Heart left ventricle (tissue), 16 donors: ENCODE measurements at regions of chr19 and their contacts with region 1.

Region 1: DNA sequence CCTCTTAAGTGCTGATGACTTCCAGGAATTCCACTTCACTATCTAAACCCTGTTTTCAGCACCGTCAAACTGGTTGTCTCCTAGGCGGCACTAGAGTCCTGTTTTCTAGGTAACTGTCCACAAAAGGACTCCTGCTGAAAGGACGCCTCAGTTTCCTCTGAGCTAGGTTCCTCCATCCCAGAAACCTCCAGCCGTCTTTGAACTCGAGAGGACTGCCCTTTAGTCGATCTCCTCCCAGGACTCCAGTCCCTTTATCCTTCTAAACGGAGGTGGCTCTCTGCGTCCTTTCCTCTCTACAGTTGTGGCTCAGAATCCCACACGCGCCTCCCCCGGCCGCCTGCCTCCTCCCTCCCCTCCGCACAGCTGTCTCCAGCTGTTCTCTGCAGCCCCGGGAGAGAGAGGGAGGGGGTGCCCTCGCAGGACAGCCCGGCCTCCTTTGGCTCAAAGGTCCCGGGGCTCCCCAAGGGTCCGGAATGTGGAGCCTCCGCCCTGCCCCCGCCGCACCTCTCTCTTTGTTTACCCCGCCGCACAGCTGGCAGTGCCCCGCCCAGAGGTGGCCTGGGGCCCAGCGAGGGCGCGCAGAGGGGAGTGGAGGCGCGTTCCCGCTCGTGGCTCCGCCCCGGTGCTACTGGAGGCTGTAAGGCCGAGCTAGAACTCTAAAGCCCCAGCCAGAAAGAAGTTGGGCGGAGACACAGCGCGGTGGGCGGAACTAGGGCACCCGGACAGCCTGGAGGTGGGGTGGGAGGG is 2.4 kb downstream of the LTBP4 start:
- DNase-seq: peak; percentile 97 to 98 (median 98)
- ATAC-seq: peak; percentile 77 to 86 (median 84)
- H3K4me3 ChIP-seq: peak overlapping the region; percentile 7 to 96 (median 68)
- H3K27ac ChIP-seq: peak overlapping the region; percentile 67 to 97 (median 86)
- H3K4me1 ChIP-seq: peaks cover 0 to 81% (median 66%) of the 10 kb centered on the region in 12 donors
- H3K27me3 ChIP-seq: peaks cover 0 to 32% (median 0%) of the 10 kb centered on the region in 9 donors
- CTCF ChIP-seq: peak in 1 of 12 donors; percentile 4
- POLR2A ChIP-seq: peak; percentile 62 to 88

Region 2: GRCh38 chr19:40285353-40286234 is 318.0 kb before region 1 on chr19:
- intact Hi-C with region 1: loop called in 2 of 10 experiments (anchors 5 to 10 kb)
- DNase-seq: peak; percentile 98 to 99 (median 99)
- ATAC-seq: peak; percentile 96 to 99 (median 97)
- H3K4me3 ChIP-seq: peak overlapping the region; percentile 73 to 99 (median 87)
- H3K27ac ChIP-seq: peak overlapping the region; percentile 87 to 99 (median 96)
- H3K4me1 ChIP-seq: peaks cover 0 to 50% (median 43%) of the 10 kb centered on the region in 12 donors
- H3K27me3 ChIP-seq: no peaks in the 10 kb centered on the region
- CTCF ChIP-seq: peak in 1 of 12 donors; percentile 18
- POLR2A ChIP-seq: peak in 1 of 2 donors; percentile 34

Region 3: DNA sequence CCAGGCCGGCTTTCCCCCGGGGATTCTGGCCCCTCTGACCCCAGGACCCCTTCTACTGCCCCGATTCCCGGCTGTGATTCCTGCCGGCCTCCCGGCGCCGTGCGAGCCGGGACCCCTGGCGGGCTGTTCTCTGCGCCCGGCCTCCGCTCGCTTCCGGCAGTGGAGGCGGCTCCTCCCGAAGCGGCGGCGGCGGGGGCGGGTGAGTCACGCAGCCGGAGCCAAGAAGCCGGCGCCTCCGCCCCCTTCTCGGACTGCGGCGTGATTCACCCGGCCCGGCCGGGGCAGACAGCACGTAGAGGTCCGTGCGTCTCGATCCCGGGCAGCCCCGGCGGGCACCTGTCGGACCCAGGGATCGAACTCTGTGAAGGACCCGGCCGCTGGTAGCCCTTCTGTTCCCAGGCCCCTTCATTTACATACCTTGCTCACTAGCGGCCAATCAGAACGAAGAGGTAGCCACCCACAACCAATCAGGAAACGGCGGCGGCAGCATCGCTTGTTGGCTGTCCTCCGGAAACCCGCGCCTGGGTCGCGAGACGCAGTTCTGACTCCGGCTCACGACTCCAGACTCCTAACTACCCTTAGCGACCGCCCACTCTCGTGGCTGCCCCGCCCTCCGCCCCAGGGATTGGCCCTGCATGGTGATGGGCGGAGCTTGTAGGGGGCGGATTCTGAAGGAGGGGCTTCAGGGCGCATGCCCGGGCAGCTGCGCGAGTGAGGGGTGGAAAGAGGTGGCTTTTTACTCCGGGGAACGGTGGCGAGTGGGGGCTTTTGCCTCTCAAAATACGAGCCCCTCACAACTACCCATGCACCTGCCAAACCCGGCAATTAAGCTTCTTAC is 177.9 kb before region 1 on chr19 and contains the start of gene SERTAD1:
- intact Hi-C with region 1: loop called in 1 of 10 experiments (anchors 5 kb)
- DNase-seq: peak; percentile 100
- ATAC-seq: peak; percentile 91 to 97 (median 94)
- H3K4me3 ChIP-seq: peak within 1 kb of the TSS; percentile 58 to 98 (median 91)
- H3K27ac ChIP-seq: peak within 1 kb of the TSS; percentile 92 to 100 (median 99)
- H3K4me1 ChIP-seq: peaks cover 0 to 44% (median 32%) of the 10 kb centered on the region in 12 donors
- H3K27me3 ChIP-seq: no peaks in the 10 kb centered on the region
- CTCF ChIP-seq: peak in 11 of 12 donors; percentile 69 to 95 (median 81)
- POLR2A ChIP-seq: peak; percentile 89 to 100
- total RNA-seq, gene SERTAD1: 7.6 to 28.0 (median 11.5) TPM

Region 4: GRCh38 chr19:40465557-40466150 is 137.9 kb before region 1 on chr19 and contains the start of gene BLVRB:
- intact Hi-C with region 1: loop called in 5 of 10 experiments (anchors 5 to 10 kb)
- DNase-seq: peak; percentile 99 to 100 (median 99)
- ATAC-seq: peak; percentile 96 to 97 (median 97)
- H3K4me3 ChIP-seq: peak within 1 kb of the TSS; percentile 50 to 85 (median 78)
- H3K27ac ChIP-seq: peak within 1 kb of the TSS; percentile 28 to 96 (median 86)
- H3K4me1 ChIP-seq: peaks cover 0 to 55% (median 19%) of the 10 kb centered on the region in 12 donors
- H3K27me3 ChIP-seq: peaks cover 0 to 12% (median 0%) of the 10 kb centered on the region in 9 donors
- CTCF ChIP-seq: no peak
- POLR2A ChIP-seq: peak; percentile 28 to 90
- total RNA-seq, gene BLVRB: 76.3 to 330 (median 100) TPM

Region 5: DNA sequence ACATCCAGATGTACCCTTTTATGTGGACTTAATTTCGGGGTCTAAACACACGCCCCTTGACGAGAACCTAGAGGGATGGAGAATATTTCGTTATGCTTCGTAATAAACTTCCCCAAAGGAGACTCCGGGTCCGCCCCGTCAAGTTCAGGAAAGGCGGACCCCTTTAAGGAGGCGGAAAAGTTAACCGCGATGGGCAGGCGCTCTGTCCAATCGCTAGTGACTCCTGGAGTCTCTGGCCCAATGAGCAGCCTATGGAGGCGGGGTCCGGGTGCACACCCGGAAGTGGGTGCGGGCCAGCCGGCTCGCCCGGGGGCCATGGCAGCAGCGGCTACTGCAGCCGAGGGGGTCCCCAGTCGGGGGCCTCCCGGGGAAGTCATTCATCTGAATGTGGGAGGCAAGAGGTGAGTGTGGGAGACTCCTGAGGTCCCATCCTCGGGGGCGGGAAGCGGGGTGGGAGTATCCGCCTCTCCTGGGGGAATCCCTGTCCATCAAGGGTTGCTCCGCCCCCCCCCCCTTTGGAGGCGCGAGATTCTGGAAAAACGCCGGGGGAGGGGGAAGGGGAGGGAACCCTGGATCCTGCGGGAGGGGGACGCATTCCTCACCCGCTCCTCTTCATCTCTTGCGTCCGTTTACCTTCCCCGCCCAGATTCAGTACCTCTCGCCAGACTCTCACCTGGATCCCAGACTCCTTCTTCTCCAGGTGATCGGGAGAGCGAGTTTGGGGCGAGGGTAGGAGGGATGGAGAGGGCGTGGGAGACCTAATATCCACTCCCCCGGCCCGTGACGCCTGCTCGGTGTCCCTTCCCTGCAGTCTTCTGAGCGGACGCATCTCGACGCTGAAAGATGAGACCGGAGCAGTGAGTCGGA is 26.7 kb before region 1 on chr19 and contains the start of gene SHKBP1:
- intact Hi-C with region 1: loop called in 1 of 10 experiments (anchors 2 kb)
- DNase-seq: peak; percentile 95 to 97 (median 97)
- ATAC-seq: peak; percentile 98 to 99 (median 99)
- H3K4me3 ChIP-seq: peak within 1 kb of the TSS; percentile 63 to 94 (median 77)
- H3K27ac ChIP-seq: peak within 1 kb of the TSS; percentile 41 to 93 (median 78)
- H3K4me1 ChIP-seq: peaks cover 0 to 36% (median 8%) of the 10 kb centered on the region in 12 donors
- H3K27me3 ChIP-seq: no peaks in the 10 kb centered on the region
- CTCF ChIP-seq: no peak
- POLR2A ChIP-seq: peak in 1 of 2 donors; percentile 64
- total RNA-seq, gene SHKBP1: 16.4 to 52.8 (median 18.4) TPM

Region 6: GRCh38 chr19:40640744-40641143 is 37.2 kb after region 1 on chr19:
- intact Hi-C with region 1: loop called in 5 of 10 experiments (anchors 2 to 5 kb)
- DNase-seq: peak in 3 of 5 donors; percentile 45 to 70 (median 53)
- ATAC-seq: peak in 3 of 4 donors; percentile 58 to 63 (median 61)
- H3K4me3 ChIP-seq: no peak overlapping the region
- H3K27ac ChIP-seq: peak overlapping the region in 10 of 12 donors; percentile 44 to 85 (median 63)
- H3K4me1 ChIP-seq: peaks cover 0 to 39% (median 12%) of the 10 kb centered on the region in 12 donors
- H3K27me3 ChIP-seq: no peaks in the 10 kb centered on the region
- CTCF ChIP-seq: no peak
- POLR2A ChIP-seq: no peak